CD8-positive, alpha-beta memory T cell (primary cell): ENCODE measurements at regions of chr9 and their contacts with region 1.

Region 1: DNA sequence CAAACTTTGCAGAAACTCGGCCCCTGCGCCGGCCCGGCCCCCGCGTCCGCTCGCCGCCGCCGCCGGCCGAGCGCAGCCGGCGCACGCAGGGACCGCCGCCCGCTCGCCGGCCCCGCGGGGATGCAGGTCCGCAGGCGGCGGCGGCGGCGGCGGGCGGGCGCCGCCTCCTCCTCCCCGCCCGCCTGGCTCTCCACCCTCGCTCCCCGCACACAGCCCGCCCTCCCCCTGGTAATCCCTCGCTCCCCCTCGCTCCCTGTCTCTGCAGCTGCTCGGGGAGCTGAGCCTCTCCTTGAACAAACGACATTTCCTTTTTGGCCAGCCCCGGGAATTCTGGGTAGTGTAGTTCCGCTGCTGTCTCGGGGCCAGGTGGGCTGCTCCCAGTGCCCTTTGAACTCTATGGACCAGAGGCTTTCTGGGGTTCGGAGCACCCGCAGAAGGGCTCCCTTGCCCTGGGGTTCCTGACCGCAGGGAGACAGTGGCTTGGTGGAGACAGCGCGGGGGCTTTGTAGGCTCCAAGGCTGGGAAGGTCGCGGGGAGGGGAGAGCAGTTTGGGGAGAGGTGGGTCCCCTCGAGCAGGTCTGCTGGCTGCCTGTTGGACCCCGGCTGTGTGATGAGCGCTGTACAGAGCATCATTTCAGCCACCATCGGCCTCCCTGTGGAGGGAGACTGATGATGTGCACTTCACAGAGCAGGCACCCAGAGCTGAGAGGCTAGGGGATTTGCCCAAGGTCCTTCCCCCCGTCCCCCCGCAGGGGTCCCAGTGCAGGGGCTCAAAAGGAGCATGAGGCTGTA is 1.8 kb upstream of the FAM78A start:
- DNase-seq: peak; percentile 59 to 78 (median 63)
- H3K4me3 ChIP-seq: peak overlapping the region; percentile 52
- H3K4me3 Mint-ChIP-seq: peak overlapping the region; percentile 79 to 94 (median 88)
- H3K27ac ChIP-seq: peak overlapping the region; percentile 67
- H3K27ac Mint-ChIP-seq: peak overlapping the region; percentile 87 to 98 (median 95)
- H3K4me1 ChIP-seq: peaks cover 26% of the 10 kb centered on the region
- H3K4me1 Mint-ChIP-seq: peaks cover 25 to 36% (median 28%) of the 10 kb centered on the region in 3 donors
- H3K27me3 ChIP-seq: no peaks in the 10 kb centered on the region
- H3K27me3 Mint-ChIP-seq: peaks cover 0 to 2% of the 10 kb centered on the region in 2 donors

Region 2: GRCh38 chr9:131060900-131061630 is 217.0 kb before region 1 on chr9:
- CTCF ChIA-PET with region 1: no interaction called
- POLR2A ChIA-PET with region 1: no interaction called
- DNase-seq: no peak
- H3K4me3 ChIP-seq: no peak overlapping the region
- H3K4me3 Mint-ChIP-seq: no peak overlapping the region
- H3K27ac ChIP-seq: no peak overlapping the region
- H3K27ac Mint-ChIP-seq: no peak overlapping the region
- H3K4me1 ChIP-seq: no peaks in the 10 kb centered on the region
- H3K4me1 Mint-ChIP-seq: no peaks in the 10 kb centered on the region
- H3K27me3 ChIP-seq: peaks cover 27% of the 10 kb centered on the region
- H3K27me3 Mint-ChIP-seq: peaks cover 0 to 4% of the 10 kb centered on the region in 2 donors

Region 3: DNA sequence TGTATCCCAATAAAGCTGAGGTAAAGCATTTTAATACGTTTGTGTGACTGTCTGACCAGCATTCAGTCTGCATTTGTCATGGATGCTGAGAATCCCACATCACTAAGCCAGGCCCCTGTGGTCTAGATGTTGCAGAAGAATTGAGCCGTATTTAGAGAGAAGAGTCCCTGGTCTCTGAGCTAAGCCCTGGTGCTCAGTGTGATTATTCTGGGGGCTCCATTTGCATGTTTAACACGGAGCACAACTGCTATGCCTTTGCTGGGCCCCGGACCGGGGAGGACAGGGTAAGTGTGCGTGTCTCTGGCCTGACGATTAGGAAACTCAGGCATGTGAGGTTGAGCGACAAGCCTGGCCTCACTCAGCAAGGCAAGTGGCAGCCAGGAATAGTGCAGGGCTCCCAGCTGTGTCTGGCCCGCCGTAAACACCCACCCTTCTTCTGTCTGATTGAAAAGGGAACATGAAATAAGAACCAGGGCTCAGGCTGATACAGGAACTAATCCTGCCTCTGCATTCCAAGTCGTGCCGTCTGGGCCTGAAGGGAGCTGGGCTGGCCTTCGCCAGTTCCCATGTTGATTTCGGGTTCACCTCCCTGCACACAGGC is 24.1 kb before region 1 on chr9:
- CTCF ChIA-PET with region 1: interaction called, 248 read pairs
- POLR2A ChIA-PET with region 1: interaction called, 300 read pairs
- DNase-seq: peak in 1 of 5 donors; percentile 44
- H3K4me3 ChIP-seq: no peak overlapping the region
- H3K4me3 Mint-ChIP-seq: peak overlapping the region; percentile 33 to 86 (median 78)
- H3K27ac ChIP-seq: no peak overlapping the region
- H3K27ac Mint-ChIP-seq: peak overlapping the region; percentile 70 to 99 (median 90)
- H3K4me1 ChIP-seq: peaks cover 76% of the 10 kb centered on the region
- H3K4me1 Mint-ChIP-seq: peaks cover 55 to 72% (median 59%) of the 10 kb centered on the region in 3 donors
- H3K27me3 ChIP-seq: no peaks in the 10 kb centered on the region
- H3K27me3 Mint-ChIP-seq: peaks cover 0 to 2% of the 10 kb centered on the region in 2 donors

Region 4: GRCh38 chr9:131310833-131311554 is 32.9 kb after region 1 on chr9:
- CTCF ChIA-PET with region 1: no interaction called
- POLR2A ChIA-PET with region 1: no interaction called
- DNase-seq: peak; percentile 59 to 83 (median 70)
- H3K4me3 ChIP-seq: peak overlapping the region; percentile 66
- H3K4me3 Mint-ChIP-seq: peak overlapping the region; percentile 12 to 85 (median 67)
- H3K27ac ChIP-seq: no peak overlapping the region
- H3K27ac Mint-ChIP-seq: peak overlapping the region; percentile 50 to 93 (median 70)
- H3K4me1 ChIP-seq: peaks cover 15% of the 10 kb centered on the region
- H3K4me1 Mint-ChIP-seq: peaks cover 10 to 19% (median 11%) of the 10 kb centered on the region in 3 donors
- H3K27me3 ChIP-seq: no peaks in the 10 kb centered on the region
- H3K27me3 Mint-ChIP-seq: peaks cover 0 to under 1% of the 10 kb centered on the region in 2 donors

Region 5: DNA sequence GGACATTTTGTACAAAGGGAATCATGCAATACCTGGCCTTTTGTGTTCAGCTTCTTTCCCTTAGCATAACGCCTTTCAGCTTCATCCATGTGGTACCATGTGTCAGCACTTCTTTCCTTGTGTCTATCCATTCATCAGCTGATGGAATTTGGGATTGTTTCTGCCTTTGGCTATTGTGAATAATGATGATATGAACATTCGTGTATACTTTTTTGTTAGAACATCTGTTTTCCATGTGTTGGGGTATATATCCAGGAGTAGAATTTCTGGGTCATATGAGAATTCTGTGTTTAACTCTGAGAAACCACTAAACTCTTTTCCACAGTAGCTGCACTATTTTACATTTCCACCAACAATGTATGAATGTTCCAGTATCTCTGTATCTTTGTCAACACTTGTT is 101.0 kb after region 1 on chr9:
- CTCF ChIA-PET with region 1: no interaction called
- POLR2A ChIA-PET with region 1: no interaction called
- DNase-seq: no peak
- H3K4me3 ChIP-seq: no peak overlapping the region
- H3K4me3 Mint-ChIP-seq: peak overlapping the region in 1 of 7 donors; percentile 61
- H3K27ac ChIP-seq: no peak overlapping the region
- H3K27ac Mint-ChIP-seq: no peak overlapping the region
- H3K4me1 ChIP-seq: no peaks in the 10 kb centered on the region
- H3K4me1 Mint-ChIP-seq: peaks cover 1 to 6% (median 4%) of the 10 kb centered on the region in 3 donors
- H3K27me3 ChIP-seq: no peaks in the 10 kb centered on the region
- H3K27me3 Mint-ChIP-seq: peaks cover 0 to 2% of the 10 kb centered on the region in 2 donors